ENCODE measurements at regions of chr15 and their contacts with region 1.

Region 1: DNA sequence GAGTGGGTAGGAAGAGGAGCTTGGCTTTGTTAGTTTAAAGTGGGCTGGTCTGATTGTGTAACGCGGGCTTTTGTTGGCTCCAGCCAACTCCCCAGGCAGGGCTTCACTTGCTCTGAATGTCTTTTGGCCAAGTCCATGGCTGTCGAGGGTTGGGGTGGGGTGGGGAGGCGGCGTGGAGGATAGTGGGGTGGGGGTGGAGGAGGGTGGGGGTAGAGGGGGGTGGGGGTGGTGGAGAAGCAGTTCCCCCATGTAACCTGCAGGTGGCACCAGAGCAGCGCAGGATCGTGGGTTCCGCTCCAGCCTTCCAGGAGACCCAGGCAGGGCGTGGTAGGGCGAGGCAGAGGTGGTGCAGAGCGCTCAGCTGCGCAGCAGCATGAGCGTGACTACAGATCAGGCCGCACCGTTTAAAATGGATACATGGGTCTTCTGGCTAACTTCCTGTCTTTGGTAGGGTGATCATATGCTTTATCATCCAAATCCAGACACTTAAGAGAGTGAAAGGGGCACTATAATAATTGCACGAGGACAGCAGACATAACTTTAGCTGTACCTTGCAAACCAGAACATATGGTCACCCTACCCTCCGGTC is 28.3 kb downstream of the GOLGA6A start:
- DNase-seq: peak; percentile 78
- CTCF ChIP-seq: peak; percentile 52

Region 2: DNA sequence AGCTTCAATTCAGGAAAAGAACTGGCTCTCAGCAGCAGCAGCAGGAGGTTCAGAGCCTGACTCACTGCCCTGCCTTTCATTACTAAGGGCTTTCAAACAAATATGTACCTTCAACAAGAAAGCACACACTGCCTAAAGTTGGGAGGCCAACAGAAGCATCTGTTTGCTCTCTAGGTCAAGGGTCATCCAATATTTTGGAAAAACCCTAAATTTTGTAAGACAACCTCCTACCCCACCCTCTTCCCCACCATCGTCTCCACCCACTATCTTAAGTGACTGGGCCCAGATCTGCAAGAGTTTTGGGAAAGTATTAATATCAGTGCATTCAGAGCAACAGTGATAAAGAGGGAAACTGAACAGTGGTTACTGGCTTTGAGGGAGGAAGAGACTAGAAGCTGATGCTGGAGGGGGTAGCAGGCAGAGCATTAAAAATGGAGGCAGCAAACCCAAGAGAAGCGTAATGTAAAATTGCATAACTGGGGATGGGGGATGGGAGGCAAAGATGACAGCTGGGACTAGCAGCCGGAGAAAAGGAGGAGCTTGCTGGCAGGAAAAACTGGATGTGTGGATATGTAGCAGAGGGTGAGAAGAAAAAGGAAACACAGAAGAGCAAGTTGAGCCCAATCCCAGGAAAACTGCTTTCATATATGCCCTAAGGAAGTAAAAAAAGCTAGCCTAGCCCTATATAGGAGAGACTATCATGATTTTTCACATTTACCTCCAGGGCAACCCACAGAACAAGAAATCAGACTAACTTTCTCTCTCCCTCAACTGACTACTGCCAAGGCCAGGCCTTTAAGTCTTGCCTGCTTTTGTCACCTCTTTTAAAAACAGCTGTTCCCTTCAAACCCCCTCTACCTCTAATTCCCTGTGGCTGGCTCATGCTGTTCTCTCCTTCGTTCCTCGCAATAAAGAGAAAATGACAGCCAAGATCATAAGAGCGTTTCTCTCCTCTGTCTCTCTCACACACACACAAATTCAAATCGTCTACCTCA is 452.3 kb before region 1 on chr15:
- CTCF ChIA-PET with region 1: no interaction called
- POLR2A ChIA-PET with region 1: no interaction called
- DNase-seq: no peak
- CTCF ChIP-seq: no peak

Region 3: DNA sequence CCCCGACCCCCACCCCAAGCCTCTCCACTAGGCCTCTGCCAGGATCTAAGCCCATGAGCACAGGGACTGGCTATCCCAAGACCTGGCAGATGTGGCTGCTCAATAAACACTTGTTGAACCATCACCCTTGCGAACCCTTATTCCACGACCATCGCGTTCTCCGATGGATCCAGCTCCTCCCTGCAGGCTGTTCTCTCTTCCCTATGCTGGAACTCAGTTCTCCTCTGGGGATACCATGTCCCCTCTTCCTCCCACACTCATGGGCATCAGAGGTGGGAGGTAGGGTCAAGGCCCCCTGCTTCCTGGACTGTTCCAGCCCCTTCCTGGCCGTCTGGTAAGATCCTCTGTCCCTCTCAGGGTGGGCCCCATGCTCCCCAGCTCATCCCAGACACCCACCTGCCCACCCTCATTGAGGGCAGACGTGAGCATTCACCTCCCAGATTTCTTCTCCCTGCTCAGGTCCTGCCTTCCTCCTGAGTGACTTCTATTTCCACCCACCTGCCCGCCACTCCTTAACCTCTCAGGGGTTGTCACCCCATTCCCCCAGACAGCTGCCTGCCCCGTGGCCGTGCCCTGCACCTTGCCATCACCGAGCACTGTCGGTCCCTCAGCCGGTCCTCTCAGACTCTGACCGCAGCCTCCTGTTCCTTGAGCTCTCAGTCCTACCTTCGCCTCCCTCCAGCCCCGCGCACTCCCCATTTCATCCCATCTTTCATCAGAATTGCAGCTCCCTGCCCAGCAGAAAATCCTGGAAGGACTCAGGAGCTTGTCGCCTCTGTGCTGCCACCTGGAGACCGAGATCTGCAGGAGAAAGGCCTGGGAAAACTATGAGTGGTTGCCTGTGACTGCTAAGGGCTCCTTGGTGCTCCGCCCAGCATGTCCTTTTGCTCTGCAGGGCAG is 17.5 kb before region 1 on chr15:
- CTCF ChIA-PET with region 1: interaction called, 123 read pairs
- POLR2A ChIA-PET with region 1: no interaction called
- DNase-seq: no peak
- CTCF ChIP-seq: peak; percentile 6

Region 4: GRCh38 chr15:74295800-74296199 is 241.8 kb after region 1 on chr15:
- CTCF ChIA-PET with region 1: no interaction called
- POLR2A ChIA-PET with region 1: no interaction called
- DNase-seq: no peak
- CTCF ChIP-seq: no peak

Measured in GM10248 (cell line).